CD4-positive, alpha-beta memory T cell (primary cell): ENCODE measurements at regions of chr5 and their contacts with region 1.

Region 1: DNA sequence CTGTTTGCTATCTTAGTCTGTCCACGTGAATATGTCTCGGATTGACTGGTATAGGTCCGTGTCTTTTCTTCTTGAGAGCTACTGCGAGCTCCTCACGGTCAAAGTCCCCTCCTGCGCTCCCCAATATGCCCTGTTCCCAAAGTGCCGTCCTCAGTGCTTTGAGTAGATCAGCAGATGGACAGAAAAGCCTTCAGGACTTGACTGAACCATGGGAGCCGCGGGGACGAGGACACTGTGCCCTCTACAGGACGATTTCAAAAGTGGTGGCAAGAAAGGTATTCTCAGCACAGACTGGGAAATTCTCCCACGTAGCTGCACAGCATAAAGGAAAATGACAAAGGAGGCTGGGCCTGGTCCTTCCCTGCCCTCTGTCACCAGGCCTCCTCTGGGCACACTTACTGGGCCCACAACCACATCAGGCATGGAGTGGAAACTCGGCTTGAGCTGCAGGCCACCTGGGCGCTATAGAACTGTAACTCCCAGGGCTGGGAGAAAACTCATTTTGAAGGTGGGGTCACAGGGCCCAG is 16.6 kb upstream of the MTMR12 start:
- DNase-seq: peak in 4 of 5 donors; percentile 39 to 57 (median 48)
- H3K4me3 ChIP-seq: no peak overlapping the region
- H3K4me3 Mint-ChIP-seq: no peak overlapping the region
- H3K27ac ChIP-seq: no peak overlapping the region
- H3K27ac Mint-ChIP-seq: peak overlapping the region in 2 of 7 donors; percentile 72 to 79
- H3K4me1 ChIP-seq: no peaks in the 10 kb centered on the region
- H3K4me1 Mint-ChIP-seq: peaks cover 0 to 4% (median 2%) of the 10 kb centered on the region in 4 donors
- H3K27me3 ChIP-seq: no peaks in the 10 kb centered on the region
- H3K27me3 Mint-ChIP-seq: peaks cover 0 to 3% of the 10 kb centered on the region in 2 donors

Region 2: DNA sequence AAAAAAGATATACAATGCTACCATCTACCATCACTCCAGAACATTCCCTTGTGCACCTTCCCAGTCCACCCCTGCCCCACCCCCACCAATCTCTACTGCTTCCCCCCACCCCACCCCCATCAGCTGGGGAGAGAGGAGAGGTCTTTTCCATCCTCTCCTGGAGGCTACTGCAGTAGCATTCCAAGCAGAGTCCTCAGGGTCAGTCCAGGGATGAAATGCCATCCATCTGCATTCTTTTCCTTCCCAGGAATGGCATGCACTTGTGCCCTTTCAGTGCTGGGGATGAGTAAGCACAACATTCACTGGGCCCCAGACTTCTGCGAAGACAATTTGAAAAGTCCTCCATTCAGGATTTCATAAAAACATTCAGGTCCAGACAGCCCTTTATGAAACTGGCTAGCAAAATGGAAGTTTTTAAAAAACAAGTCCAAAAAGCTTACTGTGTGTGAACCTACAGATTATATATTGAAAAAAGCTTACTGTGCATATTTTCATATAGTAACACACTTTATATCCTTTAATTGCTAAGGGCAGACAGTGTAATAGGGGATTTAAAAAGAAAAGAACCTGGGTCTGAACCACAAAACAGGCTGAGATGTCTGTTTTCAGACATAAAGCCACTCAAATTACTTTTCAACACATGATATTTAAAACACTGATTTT is 105.3 kb before region 1 on chr5:
- CTCF ChIA-PET with region 1: interaction called, 250 read pairs
- POLR2A ChIA-PET with region 1: no interaction called
- intact Hi-C with region 1: no loop called
- DNase-seq: no peak
- H3K4me3 ChIP-seq: no peak overlapping the region
- H3K4me3 Mint-ChIP-seq: no peak overlapping the region
- H3K27ac ChIP-seq: no peak overlapping the region
- H3K27ac Mint-ChIP-seq: no peak overlapping the region
- H3K4me1 ChIP-seq: no peaks in the 10 kb centered on the region
- H3K4me1 Mint-ChIP-seq: no peaks in the 10 kb centered on the region
- H3K27me3 ChIP-seq: no peaks in the 10 kb centered on the region
- H3K27me3 Mint-ChIP-seq: no peaks in the 10 kb centered on the region

Region 3: GRCh38 chr5:32249646-32250045 is 79.7 kb before region 1 on chr5:
- CTCF ChIA-PET with region 1: interaction called, 11 read pairs
- POLR2A ChIA-PET with region 1: no interaction called
- intact Hi-C with region 1: no loop called
- DNase-seq: no peak
- H3K4me3 ChIP-seq: no peak overlapping the region
- H3K4me3 Mint-ChIP-seq: no peak overlapping the region
- H3K27ac ChIP-seq: no peak overlapping the region
- H3K27ac Mint-ChIP-seq: peak overlapping the region in 2 of 7 donors; percentile 2 to 59
- H3K4me1 ChIP-seq: no peaks in the 10 kb centered on the region
- H3K4me1 Mint-ChIP-seq: peaks cover 0 to 1% (median 0%) of the 10 kb centered on the region in 4 donors
- H3K27me3 ChIP-seq: no peaks in the 10 kb centered on the region
- H3K27me3 Mint-ChIP-seq: no peaks in the 10 kb centered on the region

Region 4: GRCh38 chr5:32346869-32347268 is 17.5 kb after region 1 on chr5:
- CTCF ChIA-PET with region 1: interaction called, 21 read pairs
- POLR2A ChIA-PET with region 1: no interaction called
- intact Hi-C with region 1: no loop called
- DNase-seq: no peak
- H3K4me3 ChIP-seq: no peak overlapping the region
- H3K4me3 Mint-ChIP-seq: no peak overlapping the region
- H3K27ac ChIP-seq: no peak overlapping the region
- H3K27ac Mint-ChIP-seq: no peak overlapping the region
- H3K4me1 ChIP-seq: no peaks in the 10 kb centered on the region
- H3K4me1 Mint-ChIP-seq: no peaks in the 10 kb centered on the region
- H3K27me3 ChIP-seq: no peaks in the 10 kb centered on the region
- H3K27me3 Mint-ChIP-seq: no peaks in the 10 kb centered on the region

Region 5: DNA sequence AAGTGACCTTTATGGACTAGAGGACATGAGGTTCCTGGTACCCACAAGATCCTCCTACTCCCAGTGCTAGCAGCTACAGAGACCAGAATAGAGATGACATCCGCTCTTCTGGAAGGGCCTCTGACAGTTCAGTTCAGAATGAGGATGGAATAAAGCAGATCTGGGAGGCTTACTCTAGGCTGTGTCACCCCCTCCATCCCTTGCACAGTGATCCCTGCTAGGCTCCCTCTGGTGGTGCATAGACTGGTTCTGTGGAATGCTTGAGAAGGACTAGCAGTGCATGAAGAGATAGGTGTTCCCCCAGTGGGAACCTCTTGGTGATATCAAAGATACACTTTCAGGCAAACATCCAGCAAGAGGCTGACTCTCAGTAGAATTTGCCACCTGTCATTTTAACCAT is 464.7 kb after region 1 on chr5:
- CTCF ChIA-PET with region 1: no interaction called
- POLR2A ChIA-PET with region 1: no interaction called
- intact Hi-C with region 1: no loop called
- DNase-seq: no peak
- H3K4me3 ChIP-seq: no peak overlapping the region
- H3K4me3 Mint-ChIP-seq: no peak overlapping the region
- H3K27ac ChIP-seq: no peak overlapping the region
- H3K27ac Mint-ChIP-seq: no peak overlapping the region
- H3K4me1 ChIP-seq: no peaks in the 10 kb centered on the region
- H3K4me1 Mint-ChIP-seq: no peaks in the 10 kb centered on the region
- H3K27me3 ChIP-seq: no peaks in the 10 kb centered on the region
- H3K27me3 Mint-ChIP-seq: peaks cover 0 to 1% of the 10 kb centered on the region in 2 donors